ENCODE measurements at regions of chr11 and their contacts with region 1.

Region 1: GRCh38 chr11:1694064-1694845 is 2.7 kb upstream of the KRTAP5-6 start:
- DNase-seq: peak; percentile 79
- H3K4me3 Mint-ChIP-seq: no peak overlapping the region
- H3K27ac Mint-ChIP-seq: no peak overlapping the region
- H3K4me1 Mint-ChIP-seq: peaks cover 4% of the 10 kb centered on the region
- H3K27me3 Mint-ChIP-seq: peaks cover 38% of the 10 kb centered on the region

Region 2: GRCh38 chr11:1401656-1402221 is 292.5 kb before region 1 on chr11:
- CTCF ChIA-PET with region 1: no interaction called
- POLR2A ChIA-PET with region 1: no interaction called
- DNase-seq: peak; percentile 54
- H3K4me3 Mint-ChIP-seq: no peak overlapping the region
- H3K27ac Mint-ChIP-seq: no peak overlapping the region
- H3K4me1 Mint-ChIP-seq: no peaks in the 10 kb centered on the region
- H3K27me3 Mint-ChIP-seq: no peaks in the 10 kb centered on the region

Region 3: GRCh38 chr11:1679881-1680280 is 14.4 kb before region 1 on chr11:
- CTCF ChIA-PET with region 1: interaction called, 10 read pairs
- POLR2A ChIA-PET with region 1: no interaction called
- DNase-seq: no peak
- H3K4me3 Mint-ChIP-seq: no peak overlapping the region
- H3K27ac Mint-ChIP-seq: no peak overlapping the region
- H3K4me1 Mint-ChIP-seq: no peaks in the 10 kb centered on the region
- H3K27me3 Mint-ChIP-seq: peaks cover 21% of the 10 kb centered on the region

Region 4: GRCh38 chr11:1807264-1807995 is 113.2 kb after region 1 on chr11:
- CTCF ChIA-PET with region 1: interaction called, 28 read pairs
- POLR2A ChIA-PET with region 1: no interaction called
- DNase-seq: no peak
- H3K4me3 Mint-ChIP-seq: no peak overlapping the region
- H3K27ac Mint-ChIP-seq: no peak overlapping the region
- H3K4me1 Mint-ChIP-seq: no peaks in the 10 kb centered on the region
- H3K27me3 Mint-ChIP-seq: peaks cover 16% of the 10 kb centered on the region

Region 5: GRCh38 chr11:1837171-1838076 is 143.2 kb after region 1 on chr11:
- CTCF ChIA-PET with region 1: interaction called, 287 read pairs
- POLR2A ChIA-PET with region 1: interaction called, 18 read pairs
- DNase-seq: peak; percentile 85
- H3K4me3 Mint-ChIP-seq: no peak overlapping the region
- H3K27ac Mint-ChIP-seq: no peak overlapping the region
- H3K4me1 Mint-ChIP-seq: peaks cover 10% of the 10 kb centered on the region
- H3K27me3 Mint-ChIP-seq: peaks cover 3% of the 10 kb centered on the region

Measured in activated CD4-positive, alpha-beta memory T cell treated with anti-CD3 and anti-CD28 coated beads, Interleukin-2, amount 10 ng/mL, durations not matched to agents 7 days and 5 days (primary cell).